ENCODE measurements at regions of chr1 and their contacts with region 1.

Region 1: DNA sequence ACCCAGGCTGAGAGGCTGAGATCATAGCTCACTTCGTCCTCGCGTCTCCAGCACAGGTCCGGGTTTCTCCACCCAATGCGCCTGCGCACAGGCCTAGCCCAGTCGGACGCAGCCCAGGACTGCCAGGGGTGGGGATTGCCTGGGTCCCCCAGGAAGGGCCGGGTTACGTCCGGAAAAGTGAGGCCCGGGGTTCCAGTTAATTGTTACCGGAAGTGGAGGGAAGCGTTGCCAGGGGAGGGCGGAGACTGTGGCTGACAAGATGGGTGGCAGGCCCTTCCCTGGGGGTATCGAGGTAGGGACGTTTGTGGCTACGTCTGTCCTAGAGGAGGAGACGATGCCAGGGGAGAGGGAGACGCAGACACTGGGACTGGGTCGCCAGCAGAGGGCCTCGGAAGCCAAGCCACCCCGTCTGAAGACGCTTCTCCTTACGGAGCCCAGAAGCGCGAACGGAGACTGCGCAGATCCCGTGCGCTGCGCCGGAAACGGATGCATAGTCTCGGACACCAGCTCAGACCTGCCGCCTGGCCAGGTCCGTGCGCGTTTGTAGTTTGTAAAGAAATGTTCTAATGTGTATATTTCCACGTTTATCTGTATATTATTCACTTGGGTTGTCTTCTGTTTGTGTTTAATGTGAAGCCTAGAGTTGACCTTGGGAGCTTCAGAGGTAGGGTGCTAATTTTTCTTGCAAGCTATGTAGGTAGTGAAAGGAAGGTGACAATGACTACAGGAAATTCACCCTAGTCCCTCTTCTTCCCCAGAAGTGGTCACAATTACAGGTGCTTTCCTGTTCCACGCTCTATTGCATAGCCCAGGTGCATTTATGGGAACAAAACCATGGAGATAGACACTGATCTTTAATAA is 7.3 kb downstream of the RSRP1 start:
- DNase-seq: peak; percentile 98
- H3K4me3 ChIP-seq: peak overlapping the region; percentile 49
- H3K27ac ChIP-seq: peak overlapping the region; percentile 74
- H3K4me1 ChIP-seq: peaks cover 18% of the 10 kb centered on the region
- H3K27me3 ChIP-seq: no peaks in the 10 kb centered on the region
- CTCF ChIP-seq: peak; percentile 82

Region 2: DNA sequence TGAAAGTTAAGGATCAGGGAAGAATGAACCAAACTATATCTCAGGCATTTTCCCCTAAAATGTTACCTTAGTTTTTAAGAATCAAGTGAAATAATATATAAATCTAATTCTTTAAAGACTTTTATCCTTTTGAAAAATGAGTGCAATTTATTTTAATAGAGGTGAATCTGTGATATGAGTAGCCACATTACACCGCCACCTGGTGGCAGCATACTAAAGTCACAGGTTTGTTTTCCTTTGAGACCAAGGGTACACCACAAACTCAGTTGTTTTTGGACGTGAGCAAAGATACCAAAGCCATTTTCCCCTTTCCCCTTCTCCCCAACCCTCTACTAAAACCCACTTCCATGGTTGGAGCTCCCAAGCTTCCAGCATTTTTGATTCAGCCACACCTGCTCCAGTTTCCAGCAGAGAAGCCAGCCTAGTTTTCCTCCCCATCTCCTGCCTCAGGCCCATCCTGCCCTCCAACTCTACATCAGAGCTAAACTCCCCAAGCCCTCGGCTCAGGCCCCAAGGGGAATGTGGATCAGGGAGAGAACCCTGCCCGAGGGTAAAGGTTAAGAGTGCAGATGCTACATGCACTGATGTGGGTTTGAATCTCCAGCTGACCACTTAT is 280.6 kb after region 1 on chr1:
- CTCF ChIA-PET with region 1: no interaction called
- POLR2A ChIA-PET with region 1: no interaction called
- intact Hi-C with region 1: loop called (anchors 2 kb)
- DNase-seq: peak; percentile 68
- H3K4me3 ChIP-seq: no peak overlapping the region
- H3K27ac ChIP-seq: no peak overlapping the region
- H3K4me1 ChIP-seq: peaks cover 13% of the 10 kb centered on the region
- H3K27me3 ChIP-seq: no peaks in the 10 kb centered on the region
- CTCF ChIP-seq: peak; percentile 85

Measured in A673 (cell line).